ENCODE measurements at regions of chr14 and their contacts with region 1.

Region 1: GRCh38 chr14:94129111-94129757 is at the start of gene IFI27L2:
- DNase-seq: peak; percentile 76
- ATAC-seq: peak; percentile 86
- H3K4me3 Mint-ChIP-seq: peak within 1 kb of the TSS; percentile 75
- H3K27ac Mint-ChIP-seq: peak within 1 kb of the TSS; percentile 86
- H3K4me1 Mint-ChIP-seq: peaks cover 11% of the 10 kb centered on the region
- H3K27me3 Mint-ChIP-seq: peaks cover 8% of the 10 kb centered on the region
- CTCF ChIP-seq: peak; percentile 19; the same call in 1 of the 2 replicates
- total RNA-seq, gene IFI27L2: 22.1 to 37.2 TPM (median 35.5 TPM) in 3 replicates

Region 2: DNA sequence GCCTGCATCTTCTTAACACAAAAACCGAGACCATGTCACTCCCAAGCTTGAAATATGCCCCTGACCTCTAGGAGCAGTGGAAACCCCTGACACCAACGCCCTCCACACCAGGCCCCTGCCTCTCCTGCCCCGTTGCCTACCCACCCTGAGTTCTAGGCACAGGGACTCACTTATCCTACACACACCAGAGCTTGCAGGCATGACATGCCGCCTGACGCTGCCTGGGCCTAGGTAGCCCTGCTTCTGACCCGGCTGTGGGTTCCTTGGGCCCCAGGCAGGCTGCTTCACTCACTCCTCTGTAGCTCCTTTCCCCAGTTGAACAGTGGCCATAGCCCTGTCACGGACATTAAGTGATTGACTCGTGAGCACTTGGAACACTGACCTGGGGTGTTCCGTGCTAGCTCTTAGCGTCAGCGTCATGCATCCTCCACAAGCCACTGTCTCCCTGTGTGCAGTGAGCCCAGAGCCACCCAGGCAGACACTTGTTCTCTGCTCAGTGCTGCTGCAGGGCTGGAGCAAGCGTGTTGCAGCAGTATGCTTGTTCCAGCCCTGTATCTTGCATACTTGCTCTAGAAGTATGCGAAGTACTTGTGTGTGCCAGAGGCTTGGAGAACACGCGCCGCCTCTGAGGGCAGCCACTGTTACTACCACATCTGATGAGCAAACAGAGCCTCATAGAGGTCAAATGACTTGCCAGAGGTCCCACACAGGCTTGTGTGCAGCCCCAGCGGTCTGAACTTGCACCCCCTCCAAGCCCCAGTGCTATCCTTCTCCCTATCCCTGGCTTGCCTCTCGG is 87.5 kb before region 1 on chr14:
- CTCF ChIA-PET with region 1: interaction called, 29 read pairs
- POLR2A ChIA-PET with region 1: no interaction called
- DNase-seq: no peak
- ATAC-seq: no peak
- H3K4me3 Mint-ChIP-seq: no peak overlapping the region
- H3K27ac Mint-ChIP-seq: no peak overlapping the region
- H3K4me1 Mint-ChIP-seq: peaks cover under 1% of the 10 kb centered on the region; the same call in 1 of the 2 replicates
- H3K27me3 Mint-ChIP-seq: no peaks in the 10 kb centered on the region
- CTCF ChIP-seq: no peak

Region 3: DNA sequence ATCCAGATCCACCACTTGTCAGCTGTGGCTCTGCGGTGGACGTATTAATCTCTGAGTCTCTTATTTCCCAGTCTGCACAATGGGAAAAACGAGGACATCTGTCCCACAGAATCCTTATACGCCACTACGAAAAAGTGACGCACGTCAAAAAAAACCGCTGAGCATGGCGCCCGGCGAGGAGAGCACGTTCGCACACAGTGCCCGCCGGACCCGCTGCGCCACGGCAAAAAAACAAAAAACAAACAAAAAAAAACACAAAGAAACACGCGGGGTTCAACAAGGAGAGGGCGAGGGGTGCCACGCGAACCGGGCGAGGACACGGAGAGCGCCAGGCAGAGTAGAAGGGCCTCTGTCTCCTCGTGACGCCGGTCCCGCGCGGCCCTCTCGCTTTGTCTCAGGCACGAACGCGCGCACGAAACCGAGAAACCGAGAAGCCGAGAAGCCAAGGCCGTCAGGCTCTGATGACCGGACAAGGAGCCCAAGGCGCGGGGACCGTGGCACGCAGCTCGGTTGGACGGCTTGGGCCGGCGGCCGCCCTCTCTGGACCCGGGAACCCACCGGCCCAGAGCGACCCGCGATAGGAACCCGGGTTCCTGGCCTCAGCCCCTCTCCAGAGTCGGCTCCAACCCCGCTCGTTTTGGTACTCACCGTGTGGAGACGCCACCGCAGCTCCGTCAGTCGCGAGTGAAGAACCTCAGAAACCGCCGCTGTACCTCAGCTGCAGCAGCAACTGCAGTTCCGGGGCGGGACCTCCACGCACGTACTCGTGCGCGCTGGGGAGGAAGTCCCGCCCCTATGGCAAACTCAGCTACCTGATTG is 48.6 kb before region 1 on chr14 and contains the start of gene DDX24:
- CTCF ChIA-PET with region 1: interaction called, 10 read pairs
- POLR2A ChIA-PET with region 1: interaction called, 5 read pairs
- DNase-seq: peak; percentile 96
- ATAC-seq: peak; percentile 36
- H3K4me3 Mint-ChIP-seq: peak within 1 kb of the TSS; percentile 100
- H3K27ac Mint-ChIP-seq: peak within 1 kb of the TSS; percentile 93
- H3K4me1 Mint-ChIP-seq: peaks cover 29% of the 10 kb centered on the region
- H3K27me3 Mint-ChIP-seq: no peaks in the 10 kb centered on the region
- CTCF ChIP-seq: no peak
- total RNA-seq, gene DDX24: 137 to 174 TPM (median 140 TPM) in 3 replicates

Region 4: GRCh38 chr14:94180655-94181271 is 51.5 kb after region 1 on chr14:
- CTCF ChIA-PET with region 1: interaction called, 10 read pairs
- POLR2A ChIA-PET with region 1: no interaction called
- DNase-seq: no peak
- ATAC-seq: peak; percentile 61
- H3K4me3 Mint-ChIP-seq: no peak overlapping the region
- H3K27ac Mint-ChIP-seq: no peak overlapping the region
- H3K4me1 Mint-ChIP-seq: peaks cover 36% of the 10 kb centered on the region
- H3K27me3 Mint-ChIP-seq: peaks cover 16% of the 10 kb centered on the region
- CTCF ChIP-seq: no peak

Region 5: DNA sequence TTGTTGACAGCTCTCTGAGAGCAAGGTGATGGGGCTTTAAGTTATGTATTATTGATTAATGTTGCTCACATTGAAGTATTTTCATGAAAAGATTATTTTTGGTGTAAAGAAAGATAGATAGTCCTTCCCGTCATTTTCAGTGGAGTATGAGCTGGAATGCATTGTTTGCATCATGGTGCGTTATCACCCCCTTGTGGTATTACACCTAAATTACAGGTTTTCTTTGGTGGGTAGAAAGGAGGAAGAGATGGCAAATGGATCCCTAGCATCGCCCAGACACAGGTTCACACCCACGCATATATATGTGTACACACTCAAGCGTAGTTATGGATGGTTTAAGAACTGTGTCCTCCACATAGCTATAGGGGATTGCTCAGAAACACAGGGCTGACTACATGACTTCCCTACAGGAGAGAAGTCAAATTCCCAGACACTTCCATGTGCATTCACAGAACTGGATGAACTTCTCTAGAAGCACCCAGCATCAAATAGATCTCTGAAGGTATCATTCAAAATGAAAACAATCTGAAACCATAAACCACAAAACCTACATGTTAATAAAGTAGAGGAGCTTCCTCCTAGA is 178.3 kb after region 1 on chr14:
- CTCF ChIA-PET with region 1: interaction called, 10 read pairs
- POLR2A ChIA-PET with region 1: no interaction called
- DNase-seq: no peak
- ATAC-seq: peak; percentile 73
- H3K4me3 Mint-ChIP-seq: no peak overlapping the region
- H3K27ac Mint-ChIP-seq: no peak overlapping the region
- H3K4me1 Mint-ChIP-seq: no peaks in the 10 kb centered on the region
- H3K27me3 Mint-ChIP-seq: no peaks in the 10 kb centered on the region; the same call in 1 of the 2 replicates
- CTCF ChIP-seq: peak; percentile 60